Ascending aorta (tissue), 2 donors: ENCODE measurements at regions of chr9 and their contacts with region 1.

Region 1: GRCh38 chr9:114155263-114155972 is at the start of gene COL27A1:
- DNase-seq: peak in 1 of 2 donors; percentile 92
- H3K4me3 ChIP-seq: peak within 1 kb of the TSS; percentile 49 to 91
- H3K27ac ChIP-seq: peak within 1 kb of the TSS; percentile 5 to 91
- H3K4me1 ChIP-seq: peaks cover 14 to 21% of the 10 kb centered on the region in 2 donors
- H3K27me3 ChIP-seq: peaks cover 6% of the 10 kb centered on the region
- CTCF ChIP-seq: peak; percentile 91 to 98 (median 91)
- total RNA-seq, gene COL27A1: 9.3 TPM

Region 2: GRCh38 chr9:113682297-113682771 is 473.1 kb before region 1 on chr9:
- intact Hi-C with region 1: no loop called
- DNase-seq: peak in 1 of 2 donors; percentile 89
- H3K4me3 ChIP-seq: no peak overlapping the region
- H3K27ac ChIP-seq: no peak overlapping the region
- H3K4me1 ChIP-seq: no peaks in the 10 kb centered on the region
- H3K27me3 ChIP-seq: no peaks in the 10 kb centered on the region
- CTCF ChIP-seq: peak; percentile 72 to 92 (median 90)

Region 3: DNA sequence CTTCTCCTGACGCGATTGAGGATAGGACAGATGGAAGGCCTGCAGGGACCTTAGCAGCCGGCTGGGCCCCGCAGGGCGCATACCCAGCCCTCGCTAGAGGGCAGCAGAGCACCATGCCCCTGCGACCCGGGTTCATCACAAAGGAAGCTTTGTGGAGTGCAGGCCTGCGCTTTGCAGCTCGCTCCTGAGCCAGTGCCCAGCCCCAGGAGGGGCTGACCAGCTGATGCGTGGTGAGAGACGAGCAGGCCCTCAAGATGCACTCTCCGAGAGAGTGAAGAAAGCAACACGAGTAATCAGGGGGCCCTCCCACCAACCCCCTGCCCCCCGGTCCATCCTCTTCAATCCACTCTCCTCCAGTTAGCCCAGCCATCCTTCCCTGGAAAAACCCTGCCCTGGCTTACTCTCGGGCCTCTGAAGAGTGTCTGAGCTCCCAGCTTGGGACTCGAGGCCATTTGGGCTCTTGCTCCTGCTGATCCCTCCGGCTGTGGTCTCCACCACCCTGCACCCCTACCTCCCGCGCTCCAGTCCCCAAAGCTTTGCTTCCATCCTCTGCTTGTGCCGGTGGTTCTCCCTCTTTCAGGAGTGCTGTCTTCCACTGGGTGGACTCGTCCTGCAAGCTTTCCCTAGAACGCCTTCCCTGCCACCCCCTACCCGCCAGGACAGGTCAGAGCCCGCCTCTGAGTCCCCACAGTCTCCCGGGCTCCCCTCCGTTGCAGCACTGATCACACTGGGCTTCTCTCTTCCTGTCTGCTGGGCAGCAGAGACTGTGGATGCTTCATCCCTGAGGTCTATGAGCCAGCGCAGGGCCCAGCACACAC is 47.2 kb before region 1 on chr9:
- intact Hi-C with region 1: loop called (anchors 2 kb)
- DNase-seq: peak in 1 of 2 donors; percentile 82
- H3K4me3 ChIP-seq: no peak overlapping the region
- H3K27ac ChIP-seq: no peak overlapping the region
- H3K4me1 ChIP-seq: peaks cover 0 to 9% of the 10 kb centered on the region in 2 donors
- H3K27me3 ChIP-seq: no peaks in the 10 kb centered on the region
- CTCF ChIP-seq: peak; percentile 82 to 98 (median 91)

Region 4: DNA sequence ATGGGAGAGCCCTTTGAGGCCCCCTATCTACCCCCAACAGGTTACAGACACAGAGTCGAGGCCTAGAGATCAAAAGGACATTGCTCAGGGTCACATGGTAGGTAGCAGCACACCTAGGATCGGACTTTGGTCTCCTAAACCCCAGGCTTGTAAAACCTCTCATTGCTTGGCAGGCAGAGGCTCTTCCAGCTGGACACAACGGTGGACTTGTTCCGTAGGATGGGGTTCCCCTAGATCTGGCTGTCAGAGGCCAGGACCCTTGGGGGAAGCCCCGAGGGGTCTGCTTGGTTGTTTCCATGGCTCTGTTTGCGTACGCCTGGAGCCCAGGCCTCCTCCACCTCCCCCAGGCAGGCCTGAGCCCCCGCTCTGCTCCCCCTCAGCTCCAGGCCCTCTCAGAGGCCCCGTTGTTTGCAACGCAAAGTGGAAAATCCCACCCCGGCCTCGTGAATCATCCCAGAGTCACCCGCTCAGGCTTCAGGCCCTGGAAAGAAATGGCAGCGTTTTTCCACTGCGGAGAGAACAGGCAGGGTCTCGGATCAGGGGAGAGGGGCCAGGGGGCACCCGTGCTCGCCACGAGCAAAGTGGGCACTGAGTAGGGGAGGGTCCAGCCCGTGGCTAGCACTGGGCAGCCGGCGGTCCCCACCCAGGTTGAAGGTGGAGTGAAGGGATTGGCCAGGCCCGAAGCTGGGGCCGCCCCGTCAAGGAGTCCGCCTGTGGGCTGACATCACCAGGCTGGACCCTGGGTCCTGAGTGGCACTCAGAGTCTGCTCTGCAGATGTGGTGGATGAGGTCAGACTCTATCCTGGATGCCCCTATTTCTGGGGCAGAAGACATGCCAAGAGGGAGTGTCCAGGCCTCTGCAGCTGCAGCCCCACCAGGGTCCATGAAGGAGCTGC is 19.7 kb after region 1 on chr9:
- intact Hi-C with region 1: loop called (anchors 2 kb)
- DNase-seq: peak in 1 of 2 donors; percentile 85
- H3K4me3 ChIP-seq: peak overlapping the region in 1 of 2 donors; percentile 9
- H3K27ac ChIP-seq: peak overlapping the region; percentile 77 to 91
- H3K4me1 ChIP-seq: peaks cover 14 to 72% of the 10 kb centered on the region in 2 donors
- H3K27me3 ChIP-seq: no peaks in the 10 kb centered on the region
- CTCF ChIP-seq: no peak

Region 5: DNA sequence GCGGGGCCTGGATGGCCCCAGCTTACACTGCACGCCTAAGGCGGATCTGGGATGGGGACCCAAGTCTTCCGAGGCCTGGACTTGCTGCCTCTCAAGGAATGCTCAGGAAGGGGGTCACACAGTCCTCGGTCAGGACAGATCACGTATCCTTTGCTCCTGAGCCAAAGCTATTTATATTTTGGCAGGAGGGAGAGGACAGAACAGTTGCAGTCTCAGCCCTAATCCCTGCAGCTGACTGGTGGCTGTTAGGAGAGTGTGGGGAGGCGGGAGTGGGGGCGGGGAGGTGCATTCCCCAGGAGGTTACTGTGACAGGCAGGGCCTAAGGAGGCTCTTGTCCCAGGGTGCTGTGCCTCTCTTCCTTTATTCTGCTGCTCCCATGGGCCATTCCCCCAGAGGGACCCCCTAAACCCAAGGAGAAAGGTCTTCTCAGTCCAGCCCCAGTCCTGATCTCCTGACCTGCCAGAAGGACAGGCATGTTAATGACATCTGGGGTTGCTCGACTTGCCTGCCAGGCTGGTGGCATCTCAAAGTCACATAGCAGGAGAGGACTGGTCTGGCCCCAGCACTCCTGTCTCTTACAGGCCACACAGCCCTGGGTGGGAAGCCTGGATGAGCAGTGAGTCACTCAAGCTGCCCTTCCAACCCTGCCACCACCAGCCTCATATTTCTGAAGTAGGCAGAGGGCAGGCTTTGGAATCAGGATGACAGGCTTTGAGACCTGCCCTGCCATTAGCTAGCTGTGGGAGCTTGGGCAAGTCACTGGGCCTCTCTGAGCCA is 51.8 kb after region 1 on chr9:
- intact Hi-C with region 1: loop called (anchors 2 kb)
- DNase-seq: peak; percentile 33 to 85
- H3K4me3 ChIP-seq: no peak overlapping the region
- H3K27ac ChIP-seq: peak overlapping the region; percentile 47 to 86
- H3K4me1 ChIP-seq: peaks cover 19 to 30% of the 10 kb centered on the region in 2 donors
- H3K27me3 ChIP-seq: no peaks in the 10 kb centered on the region
- CTCF ChIP-seq: no peak

Region 6: DNA sequence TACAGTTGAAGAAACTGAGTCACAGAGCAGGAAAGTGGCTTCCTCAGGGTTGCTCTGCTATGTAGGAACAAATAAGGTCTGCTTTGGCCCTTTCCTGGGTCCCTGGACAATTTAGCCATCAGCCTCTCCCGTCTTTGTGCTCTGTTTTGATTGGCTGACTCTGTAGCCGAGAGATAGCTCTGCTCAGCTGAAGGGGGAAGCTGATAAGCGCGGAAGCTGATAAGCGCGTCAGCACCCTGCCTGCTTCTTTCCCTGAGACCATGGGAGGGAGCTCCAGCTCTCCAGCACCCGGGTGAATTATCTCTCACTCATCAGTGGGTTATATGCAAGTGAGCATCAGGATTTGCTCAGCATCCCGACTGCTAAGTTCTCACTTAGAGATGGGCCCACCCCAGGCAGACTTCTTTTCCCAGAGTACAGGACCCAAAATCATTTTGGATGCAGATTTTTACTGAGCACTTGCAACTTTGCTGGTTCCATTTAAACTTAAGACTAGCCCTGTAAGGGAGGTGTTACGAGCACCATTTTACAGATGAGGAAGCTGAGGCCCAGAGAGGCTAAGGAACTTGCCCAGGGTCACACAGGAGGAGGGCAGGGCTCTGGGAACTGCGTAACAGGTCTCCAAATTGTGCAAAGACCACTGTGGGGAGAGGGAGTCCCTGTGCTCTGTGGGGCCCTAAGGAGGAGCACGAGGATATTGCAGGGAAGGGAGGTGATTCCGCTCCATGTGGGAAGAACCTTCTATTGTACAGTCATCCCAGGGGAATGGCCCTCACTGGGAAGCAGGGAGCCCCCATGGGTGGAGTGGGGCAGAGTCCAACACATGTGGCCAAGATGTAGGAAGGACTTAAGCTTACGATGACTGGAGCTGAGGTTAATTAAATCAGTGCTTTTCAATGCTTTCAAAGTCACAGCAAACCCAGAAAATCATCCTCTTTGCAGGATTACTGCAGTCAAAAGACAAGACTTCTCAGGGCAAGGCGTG is 83.8 kb after region 1 on chr9:
- intact Hi-C with region 1: loop called (anchors 1 kb)
- DNase-seq: no peak
- H3K4me3 ChIP-seq: peak overlapping the region in 1 of 2 donors; percentile 19
- H3K27ac ChIP-seq: peak overlapping the region; percentile 35 to 70
- H3K4me1 ChIP-seq: peaks cover 11 to 34% of the 10 kb centered on the region in 2 donors
- H3K27me3 ChIP-seq: no peaks in the 10 kb centered on the region
- CTCF ChIP-seq: peak in 2 of 3 experiments; percentile 23 to 48

Region 7: DNA sequence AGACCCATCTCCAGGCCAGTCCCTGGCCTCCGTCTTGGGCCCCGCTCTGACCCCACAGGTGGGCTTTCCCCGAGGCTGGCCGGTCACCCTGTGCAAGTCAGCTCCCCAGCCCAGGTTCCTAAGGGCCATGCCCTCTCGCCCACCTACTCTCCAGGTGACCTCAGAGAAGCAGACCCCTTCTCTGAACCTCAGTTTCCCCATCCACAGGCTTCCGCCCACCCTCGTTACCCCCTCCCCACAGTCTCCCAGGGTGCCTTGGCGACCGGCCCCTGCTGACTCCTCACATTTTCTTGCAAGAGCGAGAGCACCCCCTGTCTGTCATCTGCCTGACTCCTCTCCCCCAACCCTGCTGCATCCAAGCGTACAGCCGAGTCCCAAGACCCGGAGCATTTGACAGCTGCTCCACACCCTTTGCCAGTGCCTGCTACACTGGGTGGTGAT is 116.2 kb after region 1 on chr9:
- intact Hi-C with region 1: loop called (anchors 1 kb)
- DNase-seq: no peak
- H3K4me3 ChIP-seq: no peak overlapping the region
- H3K27ac ChIP-seq: no peak overlapping the region
- H3K4me1 ChIP-seq: no peaks in the 10 kb centered on the region
- H3K27me3 ChIP-seq: no peaks in the 10 kb centered on the region
- CTCF ChIP-seq: peak; percentile 40 to 69 (median 58)

Region 8: DNA sequence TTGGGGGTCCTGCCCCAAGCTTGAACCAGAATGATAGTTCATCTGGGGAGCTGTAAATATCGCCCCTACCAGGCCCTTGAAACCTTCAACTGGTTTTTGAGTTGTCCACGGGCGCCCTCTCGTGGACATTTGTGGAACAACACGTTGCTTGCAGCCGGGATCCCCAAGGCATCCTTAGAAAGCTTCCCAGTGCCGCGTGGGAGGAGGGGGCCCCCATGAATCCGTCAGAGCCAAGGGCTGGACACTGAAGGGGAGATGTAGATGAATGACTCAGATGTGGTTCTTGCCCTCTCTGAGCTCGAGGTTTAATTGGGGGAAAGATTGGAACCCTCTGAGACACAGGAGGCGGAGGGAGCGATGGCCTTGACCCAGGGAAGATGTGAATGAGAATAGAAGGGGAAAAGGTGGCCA is 135.7 kb after region 1 on chr9:
- intact Hi-C with region 1: loop called (anchors 1 kb)
- DNase-seq: peak in 1 of 2 donors; percentile 86
- H3K4me3 ChIP-seq: no peak overlapping the region
- H3K27ac ChIP-seq: no peak overlapping the region
- H3K4me1 ChIP-seq: no peaks in the 10 kb centered on the region
- H3K27me3 ChIP-seq: no peaks in the 10 kb centered on the region
- CTCF ChIP-seq: peak; percentile 89 to 96 (median 93)